A549 (cell line): ENCODE measurements at regions of chr4 and their contacts with region 1.

Region 1: GRCh38 chr4:184538023-184538599 is 63.8 kb upstream of the IRF2 start:
- DNase-seq: peak; percentile 66 to 90
- ATAC-seq: peak; percentile 95 to 99
- H3K4me3 ChIP-seq: peak overlapping the region; percentile 71
- H3K27ac ChIP-seq: peak overlapping the region; percentile 90 to 93
- H3K4me1 ChIP-seq: peaks cover 8% of the 10 kb centered on the region; the same call in 1 of the 3 replicates
- CTCF ChIP-seq: peak; percentile 63
- EP300 ChIP-seq: no peak
- POLR2A ChIP-seq: no peak
- RAD21 ChIP-seq: peak; percentile 82 to 86

Region 2: DNA sequence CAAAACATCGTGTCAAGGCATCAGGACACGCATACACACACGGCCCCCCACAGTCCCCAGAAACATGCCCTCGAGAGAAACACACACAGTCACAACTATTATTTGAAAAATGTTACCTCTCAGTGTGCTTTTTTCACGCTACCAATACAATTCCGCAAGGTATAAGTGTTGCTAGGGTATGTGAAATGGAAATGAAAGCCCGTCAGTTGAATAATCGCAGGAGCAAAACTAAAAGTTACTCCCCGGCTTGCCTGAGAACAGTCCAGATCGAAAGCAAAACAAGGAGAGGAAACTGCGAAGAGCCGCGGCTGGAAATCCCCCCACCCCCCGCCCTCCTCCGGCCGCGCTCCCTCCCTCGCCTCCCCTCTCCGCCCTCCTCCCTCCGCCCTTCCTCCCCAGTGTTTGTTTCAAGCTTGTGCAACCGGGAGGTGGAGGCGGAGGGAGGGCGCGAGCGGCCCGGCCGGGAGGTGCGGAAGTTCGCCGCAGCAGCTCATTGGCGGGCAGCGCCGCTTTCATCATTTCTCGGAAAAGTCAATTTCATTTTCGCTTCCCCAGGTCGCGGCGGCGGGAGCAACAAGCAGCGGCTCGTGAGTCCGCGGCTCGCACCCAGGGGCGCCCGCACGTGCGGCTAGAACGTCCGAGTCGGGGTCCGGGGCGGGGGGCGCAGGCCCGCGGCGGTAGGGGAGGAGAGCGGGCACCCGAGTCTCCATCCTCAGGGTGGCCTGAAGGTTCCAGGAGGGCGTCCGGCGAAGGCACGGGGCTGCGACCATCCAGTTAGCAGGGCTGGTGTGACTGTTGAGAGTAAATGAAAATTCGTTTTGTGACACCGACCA is 63.6 kb before region 1 on chr4 and contains the start of gene IRF2:
- CTCF ChIA-PET with region 1: no interaction called
- POLR2A ChIA-PET with region 1: interaction called, 25 read pairs
- DNase-seq: peak; percentile 81 to 93
- ATAC-seq: peak; percentile 79 to 83
- H3K4me3 ChIP-seq: peak within 1 kb of the TSS; percentile 84
- H3K27ac ChIP-seq: peak within 1 kb of the TSS; percentile 96 to 99
- H3K4me1 ChIP-seq: peaks cover 7% of the 10 kb centered on the region; the same call in 1 of the 3 replicates
- CTCF ChIP-seq: no peak
- EP300 ChIP-seq: no peak
- POLR2A ChIP-seq: no peak; the same call in 1 of the 2 replicates
- RAD21 ChIP-seq: no peak
- polyA plus RNA-seq, gene IRF2: 18.5 and 23.5 TPM in 2 replicates